ENCODE measurements at regions of chr13 and their contacts with region 1.

Region 1: DNA sequence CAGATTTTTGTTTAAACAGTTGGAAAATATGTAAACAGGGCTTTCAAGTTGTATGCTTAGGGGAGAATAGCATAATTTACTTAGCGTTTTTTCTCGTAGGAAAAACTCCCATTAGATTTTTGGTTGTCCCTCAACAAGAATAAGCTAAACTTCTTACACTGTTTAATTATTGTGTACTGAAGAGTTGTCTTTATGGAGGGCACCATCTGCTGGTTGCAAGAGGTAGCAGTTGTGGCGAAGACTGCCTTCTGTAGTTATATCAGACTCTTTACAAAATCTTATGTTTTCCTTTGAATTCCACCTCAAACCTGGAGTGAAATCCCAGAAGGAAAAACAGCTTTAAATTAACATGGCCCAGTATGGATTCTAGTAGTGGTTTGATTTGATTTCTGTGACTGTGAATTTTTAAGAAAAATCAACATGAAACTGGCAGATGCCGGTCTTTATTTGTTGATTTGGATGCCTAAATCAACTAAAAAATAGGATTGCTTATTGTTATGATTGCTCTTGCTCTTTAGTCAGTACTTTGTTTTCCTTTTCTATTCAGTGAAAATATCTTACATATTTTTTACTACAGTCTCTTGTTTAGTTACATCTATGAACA is 53.4 kb downstream of the PDS5B start:
- DNase-seq: peak in 3 of 6 donors; percentile 21 to 43 (median 29)
- ATAC-seq: peak; percentile 82 to 96 (median 93)
- H3K4me3 ChIP-seq: no peak overlapping the region
- H3K27ac ChIP-seq: no peak overlapping the region
- H3K4me1 ChIP-seq: peaks cover 0 to 4% (median 0%) of the 10 kb centered on the region in 3 donors
- H3K27me3 ChIP-seq: no peaks in the 10 kb centered on the region
- CTCF ChIP-seq: peak; percentile 34 to 61 (median 59)

Region 2: GRCh38 chr13:32586080-32586900 is 53.3 kb before region 1 on chr13 and contains the start of gene PDS5B:
- intact Hi-C with region 1: loop called in 2 of 3 experiments (anchors 5 kb)
- DNase-seq: peak; percentile 94 to 99 (median 96)
- ATAC-seq: peak; percentile 95 to 98 (median 97)
- H3K4me3 ChIP-seq: peak within 1 kb of the TSS; percentile 56 to 82 (median 66)
- H3K27ac ChIP-seq: peak within 1 kb of the TSS; percentile 66 to 95 (median 87)
- H3K4me1 ChIP-seq: peaks cover 4 to 15% (median 6%) of the 10 kb centered on the region in 3 donors
- H3K27me3 ChIP-seq: no peaks in the 10 kb centered on the region
- CTCF ChIP-seq: peak; percentile 91 to 94 (median 93)
- total RNA-seq, gene PDS5B: 10.4 to 19.9 (median 12.4) TPM

Region 3: GRCh38 chr13:32594157-32594738 is 45.4 kb before region 1 on chr13:
- intact Hi-C with region 1: loop called in 2 of 3 experiments (anchors 5 kb)
- DNase-seq: no peak
- ATAC-seq: no peak
- H3K4me3 ChIP-seq: no peak overlapping the region
- H3K27ac ChIP-seq: no peak overlapping the region
- H3K4me1 ChIP-seq: no peaks in the 10 kb centered on the region
- H3K27me3 ChIP-seq: no peaks in the 10 kb centered on the region
- CTCF ChIP-seq: no peak

Region 4: DNA sequence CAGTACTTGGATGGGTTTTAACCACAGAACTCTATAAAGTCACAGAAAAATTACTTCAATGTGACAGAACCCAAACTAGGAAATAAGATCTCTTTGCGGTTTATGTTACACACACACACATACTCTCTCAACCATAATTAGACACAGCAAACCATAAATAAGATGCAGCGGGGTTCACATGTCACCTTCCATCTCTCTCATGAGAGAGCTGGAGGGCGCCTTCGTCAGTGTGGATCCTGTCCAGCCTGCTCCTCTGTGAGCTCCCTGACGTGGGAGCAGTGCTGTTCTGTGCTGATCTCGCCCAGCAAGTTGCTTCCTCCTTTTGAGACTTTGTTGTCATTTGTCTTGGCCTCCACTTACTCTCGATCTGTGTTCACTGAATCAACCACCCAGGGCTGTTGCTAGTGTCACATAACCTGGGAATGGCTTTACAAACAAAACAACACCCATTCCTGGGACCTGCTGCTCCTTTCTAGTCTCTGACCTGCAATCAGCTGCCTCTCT is 171.7 kb after region 1 on chr13:
- intact Hi-C with region 1: no loop called
- DNase-seq: no peak
- ATAC-seq: peak in 1 of 4 donors; percentile 50
- H3K4me3 ChIP-seq: no peak overlapping the region
- H3K27ac ChIP-seq: no peak overlapping the region
- H3K4me1 ChIP-seq: no peaks in the 10 kb centered on the region
- H3K27me3 ChIP-seq: no peaks in the 10 kb centered on the region
- CTCF ChIP-seq: no peak